Activated T-helper 2 cell treated with anti-CD3 and anti-CD28 coated beads, Interferon-gamma antibody, Interleukin-2, Interleukin-4, amounts not matched to agents 10 μg/mL and 5 μg/mL and 100 μg/mL, durations not matched to agents 14 hours and 24 hours and 36 hours (primary cell): ENCODE measurements at regions of chr4 and their contacts with region 1.

Region 1: GRCh38 chr4:98658287-98659105 is at the start of gene TSPAN5:
- DNase-seq: peak; percentile 75
- H3K4me3 Mint-ChIP-seq: peak within 1 kb of the TSS; percentile 100
- H3K27ac Mint-ChIP-seq: peak within 1 kb of the TSS; percentile 94
- H3K4me1 Mint-ChIP-seq: peaks cover 73% of the 10 kb centered on the region
- H3K27me3 Mint-ChIP-seq: no peaks in the 10 kb centered on the region
- total RNA-seq, gene TSPAN5: 21.1 and 24.4 TPM in 2 replicates

Region 2: GRCh38 chr4:98098764-98099163 is 559.7 kb before region 1 on chr4:
- intact Hi-C with region 1: no loop called
- DNase-seq: no peak
- H3K4me3 Mint-ChIP-seq: no peak overlapping the region
- H3K27ac Mint-ChIP-seq: no peak overlapping the region
- H3K4me1 Mint-ChIP-seq: no peaks in the 10 kb centered on the region
- H3K27me3 Mint-ChIP-seq: peaks cover 13% of the 10 kb centered on the region

Region 3: DNA sequence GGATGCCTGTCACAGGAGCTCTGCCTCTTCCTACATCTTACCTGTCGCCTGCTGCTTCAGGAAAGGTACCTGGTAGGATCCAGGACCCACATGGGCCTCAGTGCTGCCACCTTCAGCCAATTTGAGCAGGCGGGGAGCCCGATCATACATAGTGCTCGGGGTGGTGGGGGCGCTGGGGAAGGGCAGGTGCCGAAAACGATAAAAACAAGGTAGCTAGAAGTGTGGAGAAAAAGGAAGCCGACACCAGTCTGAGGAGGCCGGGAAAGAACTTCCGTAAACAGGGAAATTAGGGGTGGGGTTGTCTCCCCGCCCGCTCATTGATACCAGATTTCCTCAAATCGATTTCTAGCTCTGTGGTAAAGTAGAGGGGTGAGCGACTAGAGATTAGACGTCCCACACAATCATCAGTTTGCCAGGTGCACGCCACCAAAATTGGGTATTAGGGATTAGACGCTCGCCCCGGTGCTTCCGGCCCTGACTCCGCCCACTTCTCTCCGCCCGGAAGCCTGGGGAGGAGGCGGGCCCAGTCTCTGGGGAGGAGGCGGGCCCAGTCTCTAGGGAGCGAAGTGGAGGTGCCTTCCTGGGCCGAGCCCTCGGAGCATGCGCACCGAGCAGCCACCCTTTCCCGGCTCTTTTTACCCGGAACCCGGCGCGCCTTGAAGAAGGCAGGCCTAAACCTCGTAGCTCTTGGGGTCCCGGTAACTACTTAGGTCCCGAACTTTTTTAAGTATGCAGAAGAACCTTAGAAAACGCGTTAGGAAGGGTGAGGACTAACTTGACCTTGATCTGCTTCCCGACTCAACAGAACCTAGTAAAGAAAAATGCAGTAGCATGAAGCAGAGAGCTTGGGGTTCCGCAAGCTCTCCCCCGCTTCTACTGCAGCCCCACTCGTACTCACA is 515.2 kb before region 1 on chr4 and contains the start of gene STPG2:
- intact Hi-C with region 1: loop called (anchors 5 kb)
- DNase-seq: peak; percentile 88
- H3K4me3 Mint-ChIP-seq: peak within 1 kb of the TSS; percentile 83
- H3K27ac Mint-ChIP-seq: peak within 1 kb of the TSS; percentile 90
- H3K4me1 Mint-ChIP-seq: peaks cover 26% of the 10 kb centered on the region
- H3K27me3 Mint-ChIP-seq: peaks cover 13% of the 10 kb centered on the region
- total RNA-seq, gene STPG2: not detected in 2 replicates

Region 4: GRCh38 chr4:98406819-98407218 is 251.7 kb before region 1 on chr4:
- intact Hi-C with region 1: loop called (anchors 2 kb)
- DNase-seq: no peak
- H3K4me3 Mint-ChIP-seq: no peak overlapping the region
- H3K27ac Mint-ChIP-seq: peak overlapping the region; percentile 51
- H3K4me1 Mint-ChIP-seq: peaks cover 12% of the 10 kb centered on the region
- H3K27me3 Mint-ChIP-seq: no peaks in the 10 kb centered on the region

Region 5: DNA sequence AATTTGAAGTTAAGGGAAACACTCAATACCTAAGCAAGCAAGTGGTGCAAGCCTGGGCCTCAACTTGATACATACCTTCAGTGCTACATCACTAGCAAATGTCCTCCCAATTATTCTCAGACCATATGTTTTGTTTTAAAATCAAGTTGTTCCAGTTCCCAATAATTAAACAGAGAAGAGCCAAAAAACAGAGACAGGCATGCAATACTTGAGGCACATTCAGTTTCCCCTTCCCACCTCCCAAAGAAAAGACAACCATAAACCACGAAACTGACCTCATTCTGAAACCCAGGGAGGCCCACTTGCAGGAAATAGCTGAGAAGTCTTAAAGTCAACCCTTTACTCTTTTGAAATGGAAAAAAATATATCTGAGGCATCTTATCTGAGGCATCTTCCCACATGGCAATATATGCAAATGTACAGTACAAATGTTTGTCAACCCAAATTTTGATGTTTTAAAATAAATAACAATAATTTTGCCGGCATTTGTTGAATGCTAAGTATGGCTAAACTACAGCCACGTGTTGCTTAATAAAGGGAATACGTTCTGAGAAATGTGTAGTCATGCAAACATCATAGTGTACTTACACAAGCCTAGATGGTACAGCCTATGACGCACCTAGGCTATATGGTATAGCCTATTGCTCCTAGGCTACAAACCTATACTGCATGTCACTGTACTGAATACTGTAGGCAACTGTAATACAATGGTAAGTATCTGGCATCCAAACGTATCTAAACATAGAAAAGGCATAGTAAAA is 147.6 kb before region 1 on chr4:
- intact Hi-C with region 1: loop called (anchors 1 kb)
- DNase-seq: peak; percentile 28
- H3K4me3 Mint-ChIP-seq: peak overlapping the region; percentile 50
- H3K27ac Mint-ChIP-seq: peak overlapping the region; percentile 70
- H3K4me1 Mint-ChIP-seq: peaks cover 80% of the 10 kb centered on the region
- H3K27me3 Mint-ChIP-seq: no peaks in the 10 kb centered on the region

Region 6: GRCh38 chr4:98688411-98689290 is 30.2 kb after region 1 on chr4:
- intact Hi-C with region 1: loop called (anchors 1 kb)
- DNase-seq: no peak
- H3K4me3 Mint-ChIP-seq: no peak overlapping the region
- H3K27ac Mint-ChIP-seq: peak overlapping the region; percentile 65
- H3K4me1 Mint-ChIP-seq: peaks cover 22% of the 10 kb centered on the region
- H3K27me3 Mint-ChIP-seq: no peaks in the 10 kb centered on the region

Region 7: GRCh38 chr4:98928505-98929340 is 270.2 kb after region 1 on chr4 and contains the start of gene EIF4E:
- intact Hi-C with region 1: loop called (anchors 1 kb)
- DNase-seq: peak; percentile 97
- H3K4me3 Mint-ChIP-seq: peak within 1 kb of the TSS; percentile 92
- H3K27ac Mint-ChIP-seq: peak within 1 kb of the TSS; percentile 95
- H3K4me1 Mint-ChIP-seq: peaks cover 33% of the 10 kb centered on the region
- H3K27me3 Mint-ChIP-seq: no peaks in the 10 kb centered on the region
- total RNA-seq, gene EIF4E: 142 and 153 TPM in 2 replicates

Region 8: GRCh38 chr4:99088481-99089365 is 430.2 kb after region 1 on chr4 and contains the start of gene ADH5:
- intact Hi-C with region 1: loop called (anchors 10 kb)
- DNase-seq: peak; percentile 80
- H3K4me3 Mint-ChIP-seq: peak within 1 kb of the TSS; percentile 95
- H3K27ac Mint-ChIP-seq: peak within 1 kb of the TSS; percentile 92
- H3K4me1 Mint-ChIP-seq: peaks cover 26% of the 10 kb centered on the region
- H3K27me3 Mint-ChIP-seq: peaks cover 4% of the 10 kb centered on the region
- total RNA-seq, gene ADH5: 93.8 and 98.6 TPM in 2 replicates